ENCODE measurements at regions of chr9 and their contacts with region 1.

Region 1: DNA sequence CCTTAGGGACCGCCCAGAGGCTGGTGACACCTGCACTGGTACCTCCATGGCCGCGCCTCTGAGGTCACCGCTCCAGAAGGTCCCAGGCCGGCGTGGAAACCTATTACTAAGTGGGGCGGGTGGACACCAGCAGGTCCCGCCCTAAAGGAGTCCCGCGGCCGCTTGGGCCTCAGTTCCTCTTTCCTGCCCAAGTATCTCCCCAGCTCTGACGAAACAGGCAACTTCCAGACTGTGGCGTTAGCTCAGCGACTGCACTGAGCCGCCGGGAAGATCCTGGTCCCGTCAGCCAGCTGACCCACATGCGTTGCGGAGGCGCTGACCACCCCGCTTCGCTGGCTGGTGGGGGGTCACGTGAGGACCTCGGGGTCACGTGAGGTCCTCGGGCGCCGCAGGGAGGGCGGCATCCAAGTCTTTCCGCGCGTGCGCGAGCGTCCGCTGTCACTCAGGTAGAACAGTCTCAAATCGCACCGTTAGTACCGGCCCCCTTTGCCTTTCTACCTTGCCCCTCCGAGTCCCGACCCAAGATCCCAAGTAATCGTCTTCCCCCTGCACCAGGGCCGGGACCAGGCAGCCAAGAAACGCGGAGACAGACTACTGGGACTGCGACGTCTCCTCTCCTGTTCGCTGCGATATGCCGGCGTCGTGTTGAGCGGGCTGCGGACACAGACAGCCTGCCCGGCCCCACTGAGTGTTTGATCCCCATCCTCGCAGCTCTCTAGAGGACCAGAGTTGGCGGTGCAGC is 53.7 kb upstream of the KDM4C start:
- DNase-seq: peak; percentile 67 to 98 (median 86)

Region 2: GRCh38 chr9:6669881-6670280 is 34.2 kb before region 1 on chr9:
- intact Hi-C with region 1: no loop called
- DNase-seq: peak in 1 of 10 donors; percentile 44

Region 3: GRCh38 chr9:6681147-6681956 is 22.7 kb before region 1 on chr9:
- intact Hi-C with region 1: loop called (anchors 2 kb)
- DNase-seq: peak; percentile 92 to 99 (median 96)